Right ventricle myocardium superior (tissue), 1 donor: ENCODE measurements at regions of chr6 and their contacts with region 1.

Region 1: GRCh38 chr6:7974938-7975763 is 64.6 kb upstream of the TXNDC5 start:
- DNase-seq: peak; percentile 89
- ATAC-seq: peak; percentile 96

Region 2: GRCh38 chr6:7910654-7911344 is 64.4 kb before region 1 on chr6 and contains the start of gene TXNDC5:
- intact Hi-C with region 1: loop called (anchors 10 kb)
- DNase-seq: peak; percentile 89
- ATAC-seq: peak; percentile 93
- total RNA-seq, gene TXNDC5: 39.5 TPM

Region 3: DNA sequence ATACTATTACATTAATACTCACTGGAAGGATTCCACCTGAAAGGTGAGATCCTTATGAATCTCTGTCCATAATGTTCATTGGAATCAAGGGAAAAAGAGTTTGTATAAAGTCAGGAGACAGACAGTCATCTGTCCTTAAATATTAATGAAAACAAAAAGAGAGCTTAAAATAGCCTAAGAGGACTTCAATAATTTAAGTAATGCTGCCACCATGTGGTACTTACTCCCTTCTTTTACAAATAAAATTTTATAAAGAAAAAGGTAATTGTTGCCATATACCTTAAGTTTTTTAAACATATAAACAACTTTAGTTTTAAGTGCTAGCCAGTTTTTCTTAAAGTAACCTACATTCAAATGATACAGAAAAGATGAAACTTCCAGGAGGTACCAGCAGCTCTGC is 84.0 kb after region 1 on chr6:
- intact Hi-C with region 1: no loop called
- DNase-seq: no peak
- ATAC-seq: no peak